A549 (cell line): ENCODE measurements at regions of chr17 and their contacts with region 1.

Region 1: DNA sequence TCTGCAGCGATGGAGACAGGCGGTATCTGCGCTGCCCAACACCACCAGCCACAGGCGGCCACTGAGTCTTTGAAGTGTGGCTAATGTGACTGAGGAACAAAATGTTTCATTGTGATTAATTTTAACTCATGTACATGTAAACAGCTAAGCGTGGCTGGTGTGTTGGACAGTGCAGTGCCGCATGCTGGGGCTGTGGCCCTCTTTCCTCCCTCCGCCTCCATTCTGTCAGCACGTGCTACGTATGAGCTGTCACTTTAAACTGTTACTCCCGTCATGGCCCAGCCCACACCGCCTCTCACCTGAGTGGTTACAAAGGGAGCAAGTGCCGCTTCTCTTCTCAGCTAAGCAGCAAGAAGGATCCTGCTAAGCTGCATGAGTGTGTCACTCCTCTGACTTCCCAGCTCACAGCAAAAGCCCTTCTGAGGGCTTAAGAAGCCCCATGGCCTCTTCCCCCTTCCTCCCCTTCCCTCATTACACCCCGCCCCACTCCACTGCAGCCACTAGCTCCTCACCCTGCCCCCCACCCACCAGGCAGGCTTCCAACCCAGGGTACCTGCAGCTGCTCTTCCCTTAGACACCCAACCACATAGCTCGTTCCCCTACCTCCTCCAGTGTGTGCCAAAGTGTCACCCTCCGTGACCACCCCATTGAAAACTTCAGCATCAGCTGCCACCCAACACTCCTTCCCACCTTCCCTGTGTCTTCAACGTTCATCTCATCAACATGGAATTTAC is 15.0 kb downstream of the HASPIN start:
- DNase-seq: no peak
- ATAC-seq: 0 out of 6 replicates have a peak, but pooled peaks of 1 of the 2 experiments have one; percentile 10
- H3K4me3 ChIP-seq: no peak overlapping the region
- H3K27ac ChIP-seq: peak overlapping the region in 1 of 2 experiments; percentile 25; a peak in 1 of 6 replicates
- H3K4me1 ChIP-seq: peaks cover 3% of the 10 kb centered on the region; the same call in 1 of the 3 replicates
- CTCF ChIP-seq: no peak
- EP300 ChIP-seq: no peak
- POLR2A ChIP-seq: no peak
- RAD21 ChIP-seq: no peak

Region 2: DNA sequence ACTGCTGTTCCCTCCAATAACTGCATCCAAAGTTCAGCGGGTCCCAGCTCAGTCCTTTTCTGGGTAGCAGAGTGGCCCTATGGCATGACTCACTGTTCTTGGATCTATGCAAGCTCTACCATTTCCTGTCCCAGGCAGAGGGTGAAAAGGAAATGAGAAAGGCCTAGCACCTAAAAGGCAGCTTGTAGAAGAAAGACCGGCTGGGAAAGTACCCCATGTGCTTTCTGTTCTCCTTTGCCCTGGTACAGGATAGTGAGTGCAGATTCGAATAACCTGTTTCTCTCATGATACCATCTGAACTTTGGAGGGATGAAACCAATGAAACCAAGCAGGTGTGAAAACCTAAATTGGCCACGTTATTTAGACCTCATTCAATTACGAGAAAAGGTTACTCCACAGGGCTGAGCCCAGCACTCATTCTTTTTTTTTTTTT is 27.8 kb before region 1 on chr17:
- CTCF ChIA-PET with region 1: interaction called, 10 read pairs
- POLR2A ChIA-PET with region 1: no interaction called
- DNase-seq: no peak
- ATAC-seq: peak; percentile 39 to 42; a peak in 2 of 6 replicates
- H3K4me3 ChIP-seq: no peak overlapping the region
- H3K27ac ChIP-seq: no peak overlapping the region
- H3K4me1 ChIP-seq: no peaks in the 10 kb centered on the region
- CTCF ChIP-seq: no peak
- EP300 ChIP-seq: no peak
- POLR2A ChIP-seq: no peak
- RAD21 ChIP-seq: no peak

Region 3: DNA sequence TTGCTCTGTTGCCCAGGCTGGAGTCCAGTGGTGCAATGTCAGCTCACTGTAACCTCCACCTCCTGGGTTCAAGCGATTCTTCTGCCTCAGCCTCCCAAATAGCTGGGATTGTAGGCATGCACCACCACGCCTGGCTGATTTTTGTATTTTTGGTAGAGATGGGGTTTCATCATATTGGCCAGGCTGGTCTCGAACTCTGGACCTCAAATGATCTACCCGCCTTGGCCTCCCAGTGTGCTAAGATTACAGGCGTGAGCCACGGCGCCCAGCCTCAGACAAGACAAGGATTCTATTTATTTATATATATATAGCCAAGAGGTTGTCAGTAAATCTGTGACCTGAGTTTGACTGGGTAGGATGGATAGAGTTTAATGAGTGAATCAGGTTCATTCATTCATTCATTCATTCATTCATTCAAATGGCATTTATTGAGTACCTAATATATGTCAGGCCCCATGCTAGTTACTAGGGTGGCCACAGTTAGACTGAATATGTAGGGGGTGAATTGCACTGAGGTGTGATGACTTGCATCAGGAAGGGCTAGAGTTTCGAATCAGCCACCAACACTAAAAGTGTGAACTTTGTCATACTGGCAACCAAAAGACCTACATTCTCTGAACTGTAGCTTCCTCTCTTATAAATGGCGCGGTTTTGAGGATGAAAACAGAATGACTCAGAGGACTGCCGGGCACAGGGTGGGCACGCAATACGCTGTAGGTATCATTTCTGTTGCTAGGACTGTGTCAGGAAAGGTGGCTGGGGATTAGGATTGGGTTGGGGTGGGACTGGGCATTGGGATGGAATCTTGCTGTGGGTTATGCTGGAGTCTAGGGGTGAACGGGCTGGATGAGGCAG is 24.4 kb after region 1 on chr17:
- CTCF ChIA-PET with region 1: interaction called, 88 read pairs
- POLR2A ChIA-PET with region 1: no interaction called
- DNase-seq: no peak
- ATAC-seq: no peak
- H3K4me3 ChIP-seq: no peak overlapping the region
- H3K27ac ChIP-seq: no peak overlapping the region
- H3K4me1 ChIP-seq: no peaks in the 10 kb centered on the region
- CTCF ChIP-seq: no peak
- EP300 ChIP-seq: no peak
- POLR2A ChIP-seq: no peak
- RAD21 ChIP-seq: no peak

Region 4: GRCh38 chr17:3802461-3803307 is 64.0 kb after region 1 on chr17:
- CTCF ChIA-PET with region 1: interaction called, 303 read pairs
- POLR2A ChIA-PET with region 1: no interaction called
- DNase-seq: no peak
- ATAC-seq: peak in 1 of 2 experiments; percentile 12; a peak in 3 of 6 replicates
- H3K4me3 ChIP-seq: no peak overlapping the region
- H3K27ac ChIP-seq: peak overlapping the region in 1 of 2 experiments; percentile 67; a peak in 3 of 6 replicates
- H3K4me1 ChIP-seq: peaks cover 23% of the 10 kb centered on the region; the same call in 1 of the 3 replicates
- CTCF ChIP-seq: no peak
- EP300 ChIP-seq: no peak
- POLR2A ChIP-seq: no peak
- RAD21 ChIP-seq: no peak

Region 5: GRCh38 chr17:3845621-3846441 is 107.1 kb after region 1 on chr17 and contains the start of gene NCBP3:
- CTCF ChIA-PET with region 1: interaction called, 195 read pairs
- POLR2A ChIA-PET with region 1: interaction called, 6 read pairs
- DNase-seq: peak; percentile 97
- ATAC-seq: peak; percentile 92 to 98
- H3K4me3 ChIP-seq: peak within 1 kb of the TSS; percentile 93
- H3K27ac ChIP-seq: peak within 1 kb of the TSS; percentile 96 to 97
- H3K4me1 ChIP-seq: peaks cover 17% of the 10 kb centered on the region
- CTCF ChIP-seq: peak; percentile 95
- EP300 ChIP-seq: no peak
- POLR2A ChIP-seq: peak; percentile 92
- RAD21 ChIP-seq: peak; percentile 4 to 47; a peak in 3 of 5 replicates
- polyA plus RNA-seq, gene NCBP3: 27.7 and 32.7 TPM in 2 replicates

Region 6: DNA sequence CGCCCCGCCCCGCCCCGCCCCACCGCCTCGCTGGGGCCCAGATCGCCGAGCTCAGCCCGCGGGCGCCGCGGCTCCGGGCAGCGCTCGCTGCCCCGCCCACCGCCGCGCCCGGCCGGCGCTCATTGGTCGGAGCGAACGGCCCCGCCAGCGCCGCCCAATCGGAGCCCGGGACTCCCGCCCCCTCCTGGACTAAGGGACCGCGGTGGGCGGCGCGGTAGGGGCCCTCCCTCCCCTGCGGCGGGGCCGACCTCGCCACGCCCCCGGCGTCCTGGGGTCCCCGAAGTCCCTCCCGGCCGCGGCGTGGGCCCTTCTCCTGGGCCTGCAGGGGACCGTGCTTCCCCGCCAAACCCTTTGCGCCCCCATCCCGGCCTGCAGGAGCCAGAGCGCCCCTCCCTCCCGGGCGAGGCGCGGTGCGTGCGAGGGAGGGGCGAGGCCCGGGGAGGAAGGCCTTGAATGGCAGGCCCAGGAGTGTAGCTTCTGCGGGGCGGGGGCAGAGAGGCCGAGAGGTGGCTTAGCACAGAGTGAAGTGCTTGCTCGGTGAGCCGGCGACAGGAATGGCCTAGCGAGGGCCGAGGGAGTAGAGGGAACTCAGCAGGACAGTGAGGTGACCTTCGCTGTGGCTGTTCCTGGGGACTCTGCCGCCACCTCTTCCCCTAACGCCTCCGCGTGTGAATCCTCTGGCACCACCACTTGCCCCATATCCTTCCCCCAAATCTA is 154.4 kb after region 1 on chr17 and contains the start of gene CAMKK1:
- CTCF ChIA-PET with region 1: interaction called, 15 read pairs
- POLR2A ChIA-PET with region 1: no interaction called
- DNase-seq: peak; percentile 86 to 98
- ATAC-seq: peak; percentile 57 to 78
- H3K4me3 ChIP-seq: peak within 1 kb of the TSS; percentile 79
- H3K27ac ChIP-seq: peak within 1 kb of the TSS; percentile 87 to 89
- H3K4me1 ChIP-seq: peaks cover 54% of the 10 kb centered on the region
- CTCF ChIP-seq: no peak
- EP300 ChIP-seq: no peak
- POLR2A ChIP-seq: peak; percentile 15; the same call in 1 of the 2 replicates
- RAD21 ChIP-seq: no peak
- polyA plus RNA-seq, gene CAMKK1: 6.9 and 7.7 TPM in 2 replicates

Region 7: DNA sequence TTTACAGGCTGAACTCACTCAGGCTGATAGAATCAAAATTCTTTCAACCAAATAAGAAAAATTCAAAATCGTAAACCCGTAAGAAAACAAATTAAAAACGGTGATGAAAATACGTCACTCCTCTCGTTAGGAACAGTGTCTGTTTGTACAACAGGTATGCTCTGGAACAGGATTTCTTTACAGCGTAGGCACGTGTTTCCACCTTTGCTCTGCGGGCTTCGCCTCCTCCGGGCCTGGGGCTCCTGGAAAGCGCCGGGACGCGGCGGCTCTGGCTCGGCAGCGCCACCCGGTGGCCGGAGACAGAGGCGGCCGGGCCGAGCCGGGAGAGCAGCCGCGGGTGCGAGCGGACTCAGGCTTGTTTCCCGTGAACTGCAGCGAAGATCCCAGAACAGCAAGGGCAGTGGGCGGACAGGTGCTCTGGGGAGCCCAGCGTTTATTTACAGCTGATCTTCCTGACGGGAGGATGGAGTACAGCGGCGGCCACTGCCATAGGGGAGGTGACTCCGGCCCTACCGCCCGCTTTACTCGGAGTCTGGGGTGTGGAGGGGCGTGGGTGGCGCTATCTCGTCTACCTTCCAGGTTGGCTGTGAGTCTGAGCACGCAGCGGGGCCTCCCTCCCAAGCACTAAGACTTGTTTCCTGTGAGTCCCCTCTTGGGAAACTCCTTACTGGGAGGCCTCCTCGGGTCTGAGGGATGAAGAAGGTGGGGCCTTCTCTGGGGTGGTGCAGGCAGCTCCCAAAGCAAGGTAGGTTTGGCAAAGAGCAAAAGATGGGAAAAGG is 266.0 kb after region 1 on chr17:
- CTCF ChIA-PET with region 1: interaction called, 10 read pairs
- POLR2A ChIA-PET with region 1: no interaction called
- DNase-seq: peak; percentile 56 to 81
- ATAC-seq: peak; percentile 64 to 85; a peak in 5 of 6 replicates
- H3K4me3 ChIP-seq: no peak overlapping the region
- H3K27ac ChIP-seq: no peak overlapping the region
- H3K4me1 ChIP-seq: peaks cover 23% of the 10 kb centered on the region
- CTCF ChIP-seq: peak; percentile 95
- EP300 ChIP-seq: no peak
- POLR2A ChIP-seq: no peak
- RAD21 ChIP-seq: peak; percentile 89

Region 8: DNA sequence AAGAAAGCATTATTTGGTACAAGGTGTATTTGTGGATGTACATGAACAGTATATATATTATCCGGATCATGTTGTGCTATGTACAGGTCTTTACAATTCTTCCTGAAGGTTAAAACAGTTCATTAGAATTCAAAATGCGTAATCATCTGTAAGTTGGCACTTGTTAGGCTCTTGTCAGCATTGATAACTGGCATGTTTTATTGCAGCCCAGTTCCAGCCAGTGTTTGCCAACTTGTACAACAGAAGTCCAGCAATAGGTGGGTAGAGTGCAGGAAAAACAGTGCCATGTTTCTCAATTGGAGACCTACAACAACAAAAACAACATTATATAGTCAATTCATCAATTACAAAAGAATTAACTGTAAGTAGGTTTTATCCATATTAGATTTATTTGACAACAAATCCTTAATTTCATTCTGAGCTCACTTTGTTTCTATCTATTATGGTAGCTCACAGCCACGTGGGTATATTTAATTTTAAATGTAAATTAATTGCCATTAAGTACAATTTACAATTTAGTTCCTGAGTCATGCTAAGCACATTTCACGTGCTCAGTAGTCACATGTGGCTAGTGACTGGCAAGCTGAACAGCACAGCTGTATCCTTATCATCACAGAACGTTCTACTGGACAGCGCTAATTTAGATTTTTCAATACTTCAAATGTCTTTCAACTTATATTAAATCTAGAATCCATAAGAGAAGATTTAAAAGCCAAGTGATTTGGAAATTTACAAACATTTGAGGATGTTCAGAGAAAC is 533.7 kb after region 1 on chr17:
- CTCF ChIA-PET with region 1: no interaction called
- POLR2A ChIA-PET with region 1: no interaction called
- DNase-seq: no peak
- ATAC-seq: no peak
- H3K4me3 ChIP-seq: no peak overlapping the region
- H3K27ac ChIP-seq: no peak overlapping the region
- H3K4me1 ChIP-seq: no peaks in the 10 kb centered on the region
- CTCF ChIP-seq: no peak
- EP300 ChIP-seq: no peak
- POLR2A ChIP-seq: no peak
- RAD21 ChIP-seq: no peak